GM12878 (cell line): ENCODE measurements at regions of chr12 and their contacts with region 1.

Region 1: DNA sequence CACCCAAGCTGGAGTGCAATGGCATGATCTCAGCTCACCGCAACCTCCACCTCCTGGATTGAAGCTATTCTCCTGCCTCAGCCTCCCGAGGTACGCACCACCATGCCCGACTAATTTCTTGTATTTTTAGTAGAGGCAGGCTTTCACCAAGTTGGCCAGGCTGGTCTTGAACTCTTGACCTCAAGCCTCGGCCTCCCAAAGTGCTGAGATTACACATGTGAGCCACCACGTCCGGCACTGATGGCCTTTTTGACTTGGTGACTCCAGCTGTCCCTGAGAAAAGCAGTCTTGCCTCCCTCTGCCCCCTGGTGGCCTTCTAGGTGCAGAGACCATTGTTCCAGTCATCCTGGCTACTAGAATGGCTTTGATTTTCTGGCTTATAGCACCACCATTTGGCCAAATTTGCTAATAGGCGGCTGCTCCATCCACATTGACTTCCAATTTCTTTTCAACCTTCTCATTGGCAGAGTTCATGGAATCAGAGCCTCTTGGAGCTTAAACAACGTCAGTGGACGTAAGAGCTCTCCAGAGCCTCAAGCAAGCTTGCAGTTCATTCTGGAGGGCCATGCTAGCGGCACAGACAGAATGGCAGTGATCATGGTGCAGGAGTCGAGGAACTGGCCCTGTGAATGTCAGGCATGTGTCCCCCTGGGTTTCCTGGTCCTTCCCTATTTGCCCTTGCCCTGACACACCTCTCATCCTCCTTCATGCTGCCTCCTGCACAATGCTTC is 25.4 kb upstream of the EIF4B start:
- DNase-seq: peak; percentile 51
- ATAC-seq: peak; percentile 98
- H3K4me3 ChIP-seq: no peak overlapping the region
- H3K27ac ChIP-seq: no peak overlapping the region
- H3K4me1 ChIP-seq: no peaks in the 10 kb centered on the region
- H3K27me3 ChIP-seq: no peaks in the 10 kb centered on the region; a peak in 1 of 4 replicates
- CTCF ChIP-seq: peak; percentile 97 to 100 (median 99)
- EP300 ChIP-seq: no peak
- POLR2A ChIP-seq: no peak
- RAD21 ChIP-seq: peak; percentile 94

Region 2: GRCh38 chr12:52364901-52365489 is 615.9 kb before region 1 on chr12:
- CTCF ChIA-PET with region 1: no interaction called
- POLR2A ChIA-PET with region 1: no interaction called
- RAD21 ChIA-PET with region 1: no interaction called
- SMC1A ChIA-PET with region 1: no interaction called
- in situ Hi-C with region 1: no loop called
- intact Hi-C with region 1: no loop called
- DNase-seq: no peak
- ATAC-seq: peak; percentile 36; the same call in 2 of the 3 replicates
- H3K4me3 ChIP-seq: no peak overlapping the region
- H3K27ac ChIP-seq: no peak overlapping the region
- H3K4me1 ChIP-seq: no peaks in the 10 kb centered on the region
- H3K27me3 ChIP-seq: peaks cover 0 to 2% of the 10 kb centered on the region in 2 experiments; a peak in 2 of 4 replicates
- CTCF ChIP-seq: no peak
- EP300 ChIP-seq: no peak
- POLR2A ChIP-seq: no peak
- RAD21 ChIP-seq: no peak

Region 3: DNA sequence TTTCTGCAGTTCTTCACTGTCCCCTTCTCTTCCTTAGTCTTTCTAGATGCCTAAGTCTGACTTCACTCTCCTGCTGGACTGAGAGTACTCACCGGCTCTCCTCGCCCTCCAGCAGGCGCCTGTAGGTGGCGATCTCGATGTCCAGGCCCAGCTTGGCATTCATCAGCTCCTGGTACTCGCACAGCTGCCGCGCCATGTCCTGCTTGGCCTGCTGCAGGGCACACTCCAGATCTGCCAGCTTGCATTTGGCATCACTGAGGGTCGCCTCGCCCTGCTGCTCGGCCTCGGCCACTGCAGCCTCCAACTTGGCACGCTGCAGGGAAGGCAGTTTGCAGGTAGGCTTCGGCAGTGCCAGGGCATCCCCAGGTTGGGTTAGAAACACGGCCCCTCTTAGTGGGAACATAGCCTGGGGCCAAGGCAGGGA is 600.6 kb before region 1 on chr12:
- CTCF ChIA-PET with region 1: no interaction called
- POLR2A ChIA-PET with region 1: no interaction called
- RAD21 ChIA-PET with region 1: no interaction called
- SMC1A ChIA-PET with region 1: no interaction called
- in situ Hi-C with region 1: loop called (anchors 25 kb)
- intact Hi-C with region 1: no loop called
- DNase-seq: no peak
- ATAC-seq: peak; percentile 43; the same call in 1 of the 3 replicates
- H3K4me3 ChIP-seq: no peak overlapping the region
- H3K27ac ChIP-seq: no peak overlapping the region
- H3K4me1 ChIP-seq: no peaks in the 10 kb centered on the region
- H3K27me3 ChIP-seq: peaks cover 2 to 3% of the 10 kb centered on the region in 2 experiments; a peak in 3 of 4 replicates
- CTCF ChIP-seq: peak; percentile 34 to 58 (median 40); a peak in 5 of 6 replicates
- EP300 ChIP-seq: no peak
- POLR2A ChIP-seq: no peak
- RAD21 ChIP-seq: no peak

Region 4: GRCh38 chr12:52879394-52880351 is 101.2 kb before region 1 on chr12:
- CTCF ChIA-PET with region 1: interaction called, 418 read pairs
- POLR2A ChIA-PET with region 1: no interaction called
- RAD21 ChIA-PET with region 1: interaction called, 95 read pairs
- SMC1A ChIA-PET with region 1: interaction called, 115 read pairs
- in situ Hi-C with region 1: no loop called
- intact Hi-C with region 1: no loop called
- DNase-seq: no peak
- ATAC-seq: peak; percentile 98
- H3K4me3 ChIP-seq: no peak overlapping the region
- H3K27ac ChIP-seq: no peak overlapping the region
- H3K4me1 ChIP-seq: no peaks in the 10 kb centered on the region
- H3K27me3 ChIP-seq: no peaks in the 10 kb centered on the region; a peak in 2 of 4 replicates
- CTCF ChIP-seq: peak; percentile 73 to 89 (median 84)
- EP300 ChIP-seq: no peak
- POLR2A ChIP-seq: no peak
- RAD21 ChIP-seq: peak; percentile 67

Region 5: DNA sequence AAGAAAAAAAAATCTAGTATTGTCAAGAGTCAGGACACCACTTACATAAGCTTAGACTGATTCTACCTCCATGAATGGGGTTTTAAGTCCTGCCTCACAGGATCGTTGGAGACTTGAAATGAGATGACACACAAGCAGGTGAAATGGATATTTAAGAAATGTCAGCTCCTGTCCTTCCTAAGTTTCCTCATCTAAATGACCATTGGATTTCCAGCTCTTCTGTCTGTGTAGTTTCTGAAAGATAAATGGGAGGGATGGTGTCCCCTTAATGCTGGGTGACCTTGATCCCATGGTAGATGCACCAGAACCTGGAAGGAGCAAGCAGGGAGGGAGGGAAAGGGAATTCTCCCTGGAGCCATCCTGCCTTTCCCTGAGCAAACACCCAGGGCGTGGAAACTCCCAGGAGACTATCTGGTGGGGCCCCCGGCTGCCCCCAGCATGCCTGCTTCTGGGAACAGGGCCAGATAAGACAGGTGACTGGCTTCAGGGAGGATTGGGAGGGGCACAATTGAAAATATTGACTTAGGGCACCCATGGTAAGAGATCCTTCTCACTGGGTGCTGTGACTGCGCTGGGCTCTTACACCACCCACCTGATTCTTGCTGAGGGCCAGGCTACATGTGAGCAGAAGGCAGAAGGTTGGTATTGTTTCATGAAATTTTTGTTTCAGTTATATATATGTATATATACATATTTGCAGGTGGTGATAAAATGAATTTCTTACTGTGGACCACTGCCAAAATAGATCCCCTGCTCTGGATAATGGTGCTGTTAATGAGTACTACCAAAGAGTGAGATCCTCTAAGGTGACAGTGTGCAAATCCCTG is 85.6 kb before region 1 on chr12:
- CTCF ChIA-PET with region 1: interaction called, 418 read pairs
- POLR2A ChIA-PET with region 1: no interaction called
- RAD21 ChIA-PET with region 1: interaction called, 3 read pairs
- SMC1A ChIA-PET with region 1: no interaction called
- in situ Hi-C with region 1: no loop called
- intact Hi-C with region 1: no loop called
- DNase-seq: no peak
- ATAC-seq: no peak
- H3K4me3 ChIP-seq: no peak overlapping the region
- H3K27ac ChIP-seq: no peak overlapping the region
- H3K4me1 ChIP-seq: no peaks in the 10 kb centered on the region
- H3K27me3 ChIP-seq: no peaks in the 10 kb centered on the region
- CTCF ChIP-seq: no peak
- EP300 ChIP-seq: no peak
- POLR2A ChIP-seq: no peak
- RAD21 ChIP-seq: no peak

Region 6: DNA sequence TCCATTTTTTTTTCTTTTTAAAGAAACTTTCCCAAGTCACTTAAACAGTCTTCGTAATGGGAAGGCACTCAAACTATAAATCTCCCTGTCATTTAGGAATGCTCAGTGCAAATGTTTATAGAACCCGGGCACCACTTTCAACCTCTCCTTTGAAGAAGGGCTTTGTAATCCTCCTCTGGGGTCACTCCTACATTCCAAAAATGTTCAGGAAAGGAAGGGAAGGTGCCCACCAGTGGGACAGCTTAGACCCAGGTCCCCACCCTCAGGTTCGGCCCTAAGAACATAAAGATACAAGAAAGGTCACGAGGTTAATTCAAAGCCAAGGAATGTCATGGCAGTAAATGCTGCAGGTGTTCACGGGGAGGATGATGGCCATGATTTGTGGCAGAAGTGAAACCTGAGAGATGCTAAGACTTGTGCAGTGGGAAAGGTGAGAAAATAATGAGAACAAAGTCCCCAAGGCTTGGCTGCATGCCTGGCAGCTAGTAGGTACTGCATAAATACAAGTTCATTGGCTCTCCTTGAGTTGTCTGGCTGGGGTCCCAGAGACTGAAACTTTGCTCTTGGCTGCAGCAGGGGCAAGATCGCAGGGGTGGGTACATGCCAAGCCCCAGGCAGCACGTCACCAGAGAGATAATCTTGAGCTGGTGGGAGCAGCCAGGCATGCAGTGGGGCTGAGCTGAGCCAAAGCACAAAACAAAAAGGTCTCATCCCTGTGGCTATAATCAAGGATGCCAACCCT is 10.9 kb before region 1 on chr12:
- CTCF ChIA-PET with region 1: interaction called, 13 read pairs
- POLR2A ChIA-PET with region 1: no interaction called
- RAD21 ChIA-PET with region 1: interaction called, 5 read pairs
- SMC1A ChIA-PET with region 1: no interaction called
- in situ Hi-C with region 1: no loop called
- intact Hi-C with region 1: no loop called
- DNase-seq: peak; percentile 39
- ATAC-seq: peak; percentile 71
- H3K4me3 ChIP-seq: no peak overlapping the region
- H3K27ac ChIP-seq: no peak overlapping the region
- H3K4me1 ChIP-seq: peaks cover 10% of the 10 kb centered on the region
- H3K27me3 ChIP-seq: no peaks in the 10 kb centered on the region; a peak in 1 of 4 replicates
- CTCF ChIP-seq: no peak
- EP300 ChIP-seq: no peak
- POLR2A ChIP-seq: no peak
- RAD21 ChIP-seq: no peak

Region 7: GRCh38 chr12:53115112-53115890 is 134.4 kb after region 1 on chr12:
- CTCF ChIA-PET with region 1: no interaction called
- POLR2A ChIA-PET with region 1: interaction called, 17 read pairs
- RAD21 ChIA-PET with region 1: no interaction called
- SMC1A ChIA-PET with region 1: no interaction called
- in situ Hi-C with region 1: no loop called
- intact Hi-C with region 1: no loop called
- DNase-seq: no peak
- ATAC-seq: peak; percentile 66
- H3K4me3 ChIP-seq: no peak overlapping the region
- H3K27ac ChIP-seq: no peak overlapping the region
- H3K4me1 ChIP-seq: no peaks in the 10 kb centered on the region
- H3K27me3 ChIP-seq: no peaks in the 10 kb centered on the region
- CTCF ChIP-seq: no peak
- EP300 ChIP-seq: no peak
- POLR2A ChIP-seq: no peak
- RAD21 ChIP-seq: no peak